ENCODE measurements at regions of chr11 and their contacts with region 1.

Region 1: DNA sequence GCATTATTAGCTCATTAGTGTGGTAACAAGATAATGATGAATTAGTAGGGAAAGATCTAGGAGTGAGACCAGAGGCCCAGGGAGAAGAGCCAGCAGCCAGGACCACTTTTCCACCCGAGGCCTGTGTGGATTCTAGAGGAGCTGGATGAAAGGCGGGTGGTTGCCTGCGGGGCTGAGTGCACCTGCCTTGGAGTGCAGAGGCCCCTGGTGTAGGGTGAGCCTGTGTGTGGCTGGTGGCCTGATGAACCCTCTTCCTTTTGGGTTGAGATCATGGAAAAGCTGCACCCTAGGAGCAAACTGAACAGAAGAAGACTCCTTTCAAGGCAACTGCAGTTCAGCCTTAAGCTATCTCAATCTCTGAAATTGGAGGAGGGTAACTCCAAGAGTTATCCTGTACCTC is 5.9 kb upstream of the TP53AIP1 start:
- DNase-seq: peak; percentile 25
- H3K4me3 Mint-ChIP-seq: no peak overlapping the region
- H3K27ac Mint-ChIP-seq: no peak overlapping the region
- H3K4me1 Mint-ChIP-seq: no peaks in the 10 kb centered on the region
- H3K27me3 Mint-ChIP-seq: peaks cover 4% of the 10 kb centered on the region

Region 2: DNA sequence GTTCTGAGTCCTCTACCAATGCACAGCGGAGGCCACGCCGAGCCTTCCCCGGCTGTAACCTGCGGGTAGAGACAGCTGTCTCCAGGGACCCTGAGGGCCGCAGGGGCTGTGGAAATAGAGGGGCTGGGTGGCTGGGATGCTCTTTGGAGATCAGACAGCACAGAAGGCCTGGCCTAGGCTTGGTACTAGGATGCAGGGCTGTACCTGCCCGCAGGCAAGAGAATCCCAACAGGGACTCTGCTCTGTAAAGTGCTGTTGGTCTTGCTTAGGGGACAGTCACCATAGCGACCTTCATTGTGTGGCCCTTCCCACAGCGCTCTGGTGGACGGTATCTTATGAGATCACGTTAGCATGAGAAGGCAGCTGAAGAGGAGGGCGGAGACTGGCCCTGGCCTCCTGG is 68.8 kb before region 1 on chr11:
- CTCF ChIA-PET with region 1: interaction called, 175 read pairs
- intact Hi-C with region 1: loop called (anchors 2 kb)
- DNase-seq: no peak
- H3K4me3 Mint-ChIP-seq: no peak overlapping the region
- H3K27ac Mint-ChIP-seq: no peak overlapping the region
- H3K4me1 Mint-ChIP-seq: no peaks in the 10 kb centered on the region
- H3K27me3 Mint-ChIP-seq: peaks cover 8% of the 10 kb centered on the region

Region 3: DNA sequence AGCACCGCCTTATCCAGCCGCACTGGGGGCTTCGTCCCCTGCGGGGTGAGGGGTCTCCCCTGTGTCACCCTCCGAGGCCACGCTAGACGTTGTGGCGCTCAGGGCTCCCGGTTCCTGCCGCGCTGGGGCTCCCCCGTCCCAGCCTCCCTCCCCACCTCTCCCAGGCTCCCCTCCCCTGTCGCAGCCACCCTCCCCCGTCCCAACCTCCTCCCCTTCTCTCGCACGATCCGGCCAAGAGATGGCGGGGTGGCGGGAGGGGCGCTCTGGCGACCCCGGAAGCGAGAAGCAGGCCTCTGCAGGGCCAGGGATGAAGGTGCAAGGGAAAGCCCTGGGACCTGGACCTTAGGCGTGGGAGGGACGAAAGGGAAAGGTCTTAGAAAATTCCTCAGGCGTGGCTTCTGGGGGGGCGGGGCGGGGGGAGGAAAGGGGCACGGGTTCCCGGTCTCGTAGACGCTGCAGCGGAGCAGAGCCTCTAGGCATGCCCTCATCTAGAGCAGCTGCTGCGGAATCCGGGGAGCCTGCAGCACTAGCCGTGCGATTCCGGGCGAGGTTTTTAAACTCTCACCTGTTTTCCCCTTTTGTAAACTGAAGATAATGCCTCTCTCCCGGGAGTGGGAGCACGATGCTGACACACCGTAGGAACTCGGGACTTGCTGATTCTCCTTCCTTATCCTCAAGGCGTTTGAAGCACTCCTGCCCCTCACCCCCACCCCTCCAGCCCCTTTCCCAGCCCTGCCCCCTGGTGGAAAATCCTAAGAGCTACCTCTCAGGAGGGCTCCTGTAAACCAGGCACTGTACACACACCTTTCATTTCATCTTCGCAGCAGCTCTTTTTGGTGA is 43.0 kb before region 1 on chr11:
- CTCF ChIA-PET with region 1: interaction called, 10 read pairs
- intact Hi-C with region 1: no loop called
- DNase-seq: peak; percentile 62
- H3K4me3 Mint-ChIP-seq: peak overlapping the region; percentile 69
- H3K27ac Mint-ChIP-seq: no peak overlapping the region
- H3K4me1 Mint-ChIP-seq: peaks cover 11% of the 10 kb centered on the region
- H3K27me3 Mint-ChIP-seq: peaks cover 38% of the 10 kb centered on the region

Measured in activated naive CD4-positive, alpha-beta T cell treated with anti-CD3 and anti-CD28 coated beads for 36 hours (primary cell).